ENCODE measurements at regions of chr19 and their contacts with region 1.

Region 1: DNA sequence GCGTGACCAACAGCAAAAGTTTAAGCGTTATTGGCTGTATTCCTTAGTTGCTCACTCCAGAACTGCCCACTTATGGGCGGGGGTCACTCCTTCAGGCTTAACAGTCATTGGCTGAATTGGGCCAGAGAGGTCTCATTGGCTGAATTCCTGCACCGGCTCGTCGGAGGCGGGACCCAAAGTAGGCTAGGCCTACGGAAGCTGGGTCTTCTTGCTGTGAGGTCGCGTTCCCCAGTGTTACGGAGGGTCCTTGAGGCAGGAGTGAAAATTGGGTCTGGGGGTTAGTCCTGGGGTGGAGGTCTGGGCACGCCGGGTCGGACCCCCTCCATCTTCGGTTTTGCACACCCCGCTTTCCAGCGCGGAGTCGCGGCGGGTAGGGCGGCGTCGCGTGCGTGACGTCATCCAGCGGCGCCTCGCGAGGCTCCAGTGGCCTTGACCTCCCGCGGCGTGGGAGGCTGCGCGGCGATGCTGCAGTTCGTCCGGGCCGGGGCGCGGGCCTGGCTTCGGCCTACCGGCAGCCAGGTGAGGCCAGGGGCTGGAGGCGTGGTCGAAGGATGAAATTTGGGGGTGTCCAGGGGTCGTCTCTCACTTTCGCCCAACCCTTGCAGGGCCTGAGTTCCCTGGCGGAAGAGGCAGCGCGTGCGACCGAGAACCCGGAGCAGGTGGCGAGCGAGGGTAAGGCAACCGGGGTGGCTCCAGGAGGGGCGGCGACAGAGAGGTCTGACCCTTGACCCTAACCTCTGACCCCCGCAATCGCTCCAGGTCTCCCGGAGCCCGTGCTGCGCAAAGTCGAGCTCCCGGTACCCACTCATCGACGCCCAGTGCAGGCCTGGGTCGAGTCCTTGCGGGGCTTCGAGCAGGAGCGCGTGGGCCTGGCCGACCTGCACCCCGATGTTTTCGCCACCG is at the start of gene MRPL4:
- DNase-seq: peak; percentile 94 to 99
- H3K4me3 ChIP-seq: peak within 1 kb of the TSS; percentile 94
- H3K27ac ChIP-seq: peak within 1 kb of the TSS; percentile 43
- H3K4me1 ChIP-seq: peaks cover 4% of the 10 kb centered on the region; the same call in 1 of the 2 replicates
- H3K27me3 ChIP-seq: no peaks in the 10 kb centered on the region
- CTCF ChIP-seq: no peak
- total RNA-seq, gene MRPL4: 96.4 and 98.2 TPM in 2 replicates

Region 2: GRCh38 chr19:9906475-9907087 is 345.5 kb before region 1 on chr19:
- CTCF ChIA-PET with region 1: interaction called, 12 read pairs
- POLR2A ChIA-PET with region 1: no interaction called
- intact Hi-C with region 1: no loop called
- DNase-seq: no peak
- H3K4me3 ChIP-seq: no peak overlapping the region
- H3K27ac ChIP-seq: no peak overlapping the region
- H3K4me1 ChIP-seq: no peaks in the 10 kb centered on the region
- H3K27me3 ChIP-seq: peaks cover 26% of the 10 kb centered on the region
- CTCF ChIP-seq: no peak

Region 3: DNA sequence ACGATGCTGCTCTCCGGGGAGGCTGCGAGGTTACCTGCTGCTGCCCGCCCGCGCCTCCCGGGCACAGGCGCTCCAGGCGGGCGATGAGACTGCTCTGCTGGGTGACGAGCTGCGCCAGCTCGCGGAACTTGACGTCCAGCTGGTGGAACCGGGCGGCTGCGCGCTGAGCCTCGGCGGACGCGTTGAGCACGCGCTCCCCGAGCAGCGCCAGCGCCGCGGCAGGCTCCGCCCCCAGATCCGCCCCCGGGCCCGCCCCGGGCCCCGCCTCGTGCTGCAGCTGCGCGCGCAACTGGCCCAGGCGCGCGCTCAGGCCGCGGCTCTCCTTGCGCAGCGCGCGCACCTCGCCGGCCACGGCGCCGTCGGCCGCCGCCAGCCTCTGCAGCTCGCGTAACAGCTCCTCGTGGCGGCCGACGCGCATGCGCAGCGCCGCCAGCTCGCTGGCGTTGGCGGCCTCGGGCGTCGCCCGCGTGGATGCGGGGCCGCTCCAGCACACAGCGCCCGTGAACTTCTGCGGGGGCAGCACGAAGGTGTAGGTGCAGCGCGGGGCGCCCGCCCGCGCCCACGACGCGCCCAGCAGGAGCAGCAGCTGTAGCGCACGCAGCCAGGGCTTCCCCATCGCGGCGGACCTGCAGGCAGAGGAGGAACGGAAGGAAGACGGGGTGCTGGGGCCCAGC is 156.0 kb before region 1 on chr19:
- CTCF ChIA-PET with region 1: no interaction called
- POLR2A ChIA-PET with region 1: interaction called, 5 read pairs
- intact Hi-C with region 1: loop called (anchors 5 kb)
- DNase-seq: peak; percentile 77 to 95
- H3K4me3 ChIP-seq: peak overlapping the region; percentile 56
- H3K27ac ChIP-seq: no peak overlapping the region
- H3K4me1 ChIP-seq: peaks cover 11% of the 10 kb centered on the region
- H3K27me3 ChIP-seq: no peaks in the 10 kb centered on the region
- CTCF ChIP-seq: no peak

Region 4: DNA sequence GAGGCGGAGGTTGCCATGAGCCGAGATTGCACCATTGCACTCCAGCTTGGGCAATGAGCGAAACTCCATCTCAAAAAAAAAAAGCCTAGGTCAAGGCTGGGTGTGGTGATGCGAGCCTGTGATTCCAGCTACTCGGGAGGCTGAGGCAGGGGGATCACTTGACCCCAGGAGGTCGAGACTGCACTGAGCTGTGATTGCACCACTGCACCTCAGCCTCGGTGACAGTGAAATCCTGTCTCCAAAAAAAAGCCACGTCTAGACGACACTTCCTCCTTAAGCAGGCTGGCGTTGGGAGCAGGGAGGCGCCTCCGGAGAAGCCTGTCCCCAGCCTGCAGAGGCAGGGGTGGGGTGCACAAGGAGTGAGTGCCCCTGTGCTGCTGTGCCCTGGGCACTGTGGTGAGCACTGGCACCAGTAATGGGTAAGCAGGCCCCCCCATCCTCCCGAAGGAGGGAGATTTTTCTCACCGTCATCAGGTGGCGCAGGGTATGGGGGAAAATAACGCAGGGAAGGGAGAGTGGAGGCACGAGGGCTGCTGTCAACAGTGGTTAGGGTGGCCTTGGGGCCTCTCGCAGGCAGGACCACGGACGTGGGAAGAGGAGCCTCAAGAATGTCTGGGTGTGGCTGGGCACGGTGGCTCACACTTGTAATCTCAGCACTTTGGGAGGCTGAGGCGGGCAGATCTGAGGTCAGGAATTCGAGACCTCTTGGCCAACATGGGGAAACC is 139.8 kb before region 1 on chr19:
- CTCF ChIA-PET with region 1: no interaction called
- POLR2A ChIA-PET with region 1: no interaction called
- intact Hi-C with region 1: loop called (anchors 5 kb)
- DNase-seq: no peak
- H3K4me3 ChIP-seq: no peak overlapping the region
- H3K27ac ChIP-seq: no peak overlapping the region
- H3K4me1 ChIP-seq: peaks cover 8% of the 10 kb centered on the region
- H3K27me3 ChIP-seq: no peaks in the 10 kb centered on the region
- CTCF ChIP-seq: no peak

Region 5: DNA sequence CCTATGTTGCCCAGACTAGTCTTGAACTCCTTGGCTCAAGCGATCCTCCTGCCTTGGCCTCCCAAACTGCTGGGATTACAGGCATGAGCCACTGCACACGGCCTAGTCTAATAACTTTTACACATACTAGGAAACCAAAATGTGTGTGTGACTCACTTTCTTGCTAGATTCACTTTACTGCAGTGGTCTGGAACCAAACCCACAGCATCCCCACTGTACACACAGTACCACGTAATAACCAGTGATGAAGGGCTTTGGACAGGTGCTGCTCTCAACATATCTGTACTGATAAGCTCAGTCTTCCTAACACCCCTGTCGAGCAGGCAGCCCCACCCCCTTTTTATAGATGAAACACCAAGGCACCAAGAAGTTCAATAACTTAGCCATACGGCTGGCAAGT is 62.4 kb before region 1 on chr19:
- CTCF ChIA-PET with region 1: no interaction called
- POLR2A ChIA-PET with region 1: interaction called, 18 read pairs
- intact Hi-C with region 1: loop called (anchors 5 kb)
- DNase-seq: no peak
- H3K4me3 ChIP-seq: no peak overlapping the region
- H3K27ac ChIP-seq: no peak overlapping the region
- H3K4me1 ChIP-seq: peaks cover 26% of the 10 kb centered on the region
- H3K27me3 ChIP-seq: no peaks in the 10 kb centered on the region
- CTCF ChIP-seq: no peak

Region 6: DNA sequence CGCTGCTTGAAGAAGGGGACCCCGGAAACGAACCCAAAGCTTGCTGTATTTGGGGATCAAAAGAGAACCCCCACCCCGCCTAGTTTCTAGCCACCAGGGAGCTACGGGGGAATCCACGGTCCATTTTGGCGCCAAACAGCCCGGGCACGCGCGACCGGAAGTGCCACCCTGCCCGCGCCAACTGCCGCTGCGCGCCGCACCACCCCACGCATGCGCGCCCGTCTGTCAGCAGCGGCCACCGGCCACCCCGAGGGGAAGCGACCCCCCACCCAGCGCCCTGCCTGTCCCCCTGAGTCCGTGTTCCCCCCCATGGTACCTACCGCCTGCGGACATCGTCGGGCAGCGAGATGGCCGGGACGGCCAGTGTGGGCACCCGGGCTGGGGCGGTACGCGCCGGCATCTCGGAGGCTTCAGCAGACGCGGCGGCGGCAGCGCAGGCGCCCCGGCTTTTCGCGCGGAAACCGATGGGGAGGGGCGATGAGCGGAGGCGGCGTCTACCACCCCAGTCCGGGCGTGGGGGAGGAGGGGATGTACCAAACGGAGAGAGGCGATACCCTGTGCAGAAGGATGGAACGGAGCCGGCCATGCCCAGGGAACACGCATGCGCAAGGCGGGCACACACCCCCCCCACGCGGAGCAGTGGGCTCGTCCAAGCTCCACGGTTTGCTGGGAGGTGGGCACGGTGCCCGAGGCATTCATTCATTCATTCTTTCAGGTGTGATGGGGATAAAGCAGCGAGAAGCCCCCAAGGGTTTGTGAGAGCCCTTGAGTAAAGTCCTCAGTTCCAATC is 57.3 kb before region 1 on chr19 and contains the start of gene DNMT1:
- CTCF ChIA-PET with region 1: no interaction called
- POLR2A ChIA-PET with region 1: interaction called, 4 read pairs
- intact Hi-C with region 1: loop called (anchors 5 kb)
- DNase-seq: peak; percentile 88 to 97
- H3K4me3 ChIP-seq: peak within 1 kb of the TSS; percentile 87
- H3K27ac ChIP-seq: peak within 1 kb of the TSS; percentile 2; the same call in 1 of the 2 replicates
- H3K4me1 ChIP-seq: peaks cover 18% of the 10 kb centered on the region
- H3K27me3 ChIP-seq: no peaks in the 10 kb centered on the region
- CTCF ChIP-seq: no peak
- total RNA-seq, gene DNMT1: 111 and 117 TPM in 2 replicates

Measured in PC-9 (cell line).